Prostate gland (tissue), 2 donors: ENCODE measurements at regions of chr12 and their contacts with region 1.

Region 1: DNA sequence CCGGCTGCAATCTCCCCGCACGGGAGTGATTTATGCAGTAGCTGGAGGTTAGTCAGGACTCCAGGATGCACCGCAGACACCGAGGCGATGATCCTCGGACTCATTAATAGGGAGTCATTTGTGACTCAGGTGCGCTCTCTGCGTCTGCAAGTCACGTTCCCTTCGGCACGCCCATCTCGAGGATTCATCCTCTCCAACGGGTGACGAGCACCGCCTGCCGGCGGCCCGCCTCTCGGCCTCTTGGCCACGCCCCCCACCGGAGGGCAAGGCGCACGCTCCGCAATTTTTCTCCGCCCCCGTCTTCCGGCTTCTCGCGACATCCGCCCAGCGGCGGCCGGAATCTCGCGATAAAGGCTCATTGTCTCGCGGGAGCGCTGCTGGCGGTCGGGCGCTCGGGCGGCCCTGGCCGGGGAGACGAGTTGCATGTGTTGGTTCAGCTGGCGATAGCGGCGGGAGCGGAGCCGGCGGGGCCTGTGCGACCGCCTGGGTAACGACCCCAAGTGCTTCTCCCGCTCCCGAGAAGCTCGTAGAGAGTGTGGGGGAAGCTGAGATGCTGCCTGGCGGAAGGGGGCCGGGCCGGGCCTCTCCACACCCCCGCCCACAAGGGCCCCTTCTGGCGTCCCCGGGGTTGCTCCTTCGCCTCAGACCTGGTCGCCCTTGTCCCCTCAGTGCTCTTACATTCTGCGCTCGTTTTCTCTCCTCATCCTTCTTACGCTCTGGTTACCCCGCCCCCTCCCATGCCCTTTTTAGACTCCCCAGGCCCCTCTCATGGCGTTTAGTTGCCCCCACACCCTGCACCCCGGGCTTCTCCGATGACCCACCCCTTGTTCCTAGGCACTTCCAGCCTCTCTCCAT is at the start of gene DENR:
- DNase-seq: peak; percentile 98
- H3K4me3 ChIP-seq: peak within 1 kb of the TSS; percentile 75 to 78
- H3K27ac ChIP-seq: peak within 1 kb of the TSS; percentile 79 to 85
- H3K4me1 ChIP-seq: peaks cover 4% of the 10 kb centered on the region
- H3K27me3 ChIP-seq: no peaks in the 10 kb centered on the region
- CTCF ChIP-seq: peak; percentile 95 to 100 (median 98)
- POLR2A ChIP-seq: peak; percentile 71
- total RNA-seq, gene DENR: 20.4 to 32.8 TPM

Region 2: GRCh38 chr12:122526683-122527477 is 225.8 kb before region 1 on chr12 and contains the starts of genes KNTC1 and RSRC2:
- intact Hi-C with region 1: loop called (anchors 1 kb)
- DNase-seq: peak; percentile 99
- H3K4me3 ChIP-seq: peak within 1 kb of the TSS; percentile 66 to 77
- H3K27ac ChIP-seq: peak within 1 kb of the TSS; percentile 99
- H3K4me1 ChIP-seq: no peaks in the 10 kb centered on the region
- H3K27me3 ChIP-seq: no peaks in the 10 kb centered on the region
- CTCF ChIP-seq: peak in 2 of 4 experiments; percentile 5 to 9
- POLR2A ChIP-seq: peak; percentile 94
- total RNA-seq, gene KNTC1: 10.8 to 28.6 TPM
- total RNA-seq, gene RSRC2: 53.0 to 61.9 TPM

Region 3: GRCh38 chr12:122635471-122635870 is 117.2 kb before region 1 on chr12:
- intact Hi-C with region 1: loop called (anchors 5 kb)
- DNase-seq: no peak
- H3K4me3 ChIP-seq: no peak overlapping the region
- H3K27ac ChIP-seq: no peak overlapping the region
- H3K4me1 ChIP-seq: no peaks in the 10 kb centered on the region
- H3K27me3 ChIP-seq: no peaks in the 10 kb centered on the region
- CTCF ChIP-seq: no peak
- POLR2A ChIP-seq: no peak